ENCODE measurements at regions of chr12 and their contacts with region 1.

Region 1: DNA sequence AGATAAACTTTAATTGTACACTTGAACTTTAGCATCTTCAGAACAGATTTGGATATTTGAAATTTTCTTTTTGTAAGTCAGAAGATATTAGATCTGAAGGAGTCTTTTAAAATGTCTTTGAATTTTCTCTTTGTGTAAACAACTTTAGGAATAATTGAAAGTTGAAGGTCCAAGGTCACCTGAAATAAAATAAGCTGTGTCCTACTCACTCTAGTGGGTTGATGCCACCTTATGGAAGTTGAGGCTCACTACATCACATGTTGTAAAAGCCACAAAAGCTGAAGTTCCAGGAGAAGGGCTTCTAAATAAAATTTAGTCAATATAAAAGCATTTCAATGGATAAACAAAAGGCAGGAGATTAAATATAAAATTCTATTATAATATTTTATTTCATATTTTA is 122.0 kb upstream of the ATXN7L3B start:
- DNase-seq: peak in 1 of 2 experiments; percentile 23
- H3K4me3 ChIP-seq: no peak overlapping the region
- H3K4me3 Mint-ChIP-seq: no peak overlapping the region
- H3K27ac Mint-ChIP-seq: no peak overlapping the region
- H3K4me1 ChIP-seq: no peaks in the 10 kb centered on the region
- H3K4me1 Mint-ChIP-seq: no peaks in the 10 kb centered on the region
- H3K27me3 ChIP-seq: no peaks in the 10 kb centered on the region
- H3K27me3 Mint-ChIP-seq: no peaks in the 10 kb centered on the region
- CTCF ChIP-seq: peak; percentile 24 to 55

Region 2: DNA sequence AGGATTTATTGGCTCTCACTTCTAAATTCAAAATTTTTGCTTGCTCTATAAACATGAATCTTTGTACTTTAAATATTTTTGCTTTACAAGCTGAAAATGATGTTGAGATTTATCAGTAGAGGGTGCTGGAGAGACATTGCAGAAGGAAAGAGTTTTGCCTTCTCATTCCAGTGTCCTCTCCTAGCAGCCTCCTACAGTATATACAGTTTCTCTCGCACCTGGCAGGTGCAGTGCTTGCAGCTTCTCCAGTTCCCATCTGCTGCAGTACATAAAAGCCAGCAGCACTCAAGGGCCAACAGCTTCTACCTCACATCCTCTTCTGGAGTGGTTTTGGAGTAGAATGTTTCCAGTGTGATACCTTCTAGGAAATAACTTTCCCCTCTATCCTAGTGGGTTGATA is 479.8 kb before region 1 on chr12:
- CTCF ChIA-PET with region 1: interaction called, 4 read pairs
- POLR2A ChIA-PET with region 1: no interaction called
- intact Hi-C with region 1: loop called (anchors 1 kb)
- DNase-seq: peak in 1 of 2 experiments; percentile 22
- H3K4me3 ChIP-seq: no peak overlapping the region
- H3K4me3 Mint-ChIP-seq: no peak overlapping the region
- H3K27ac Mint-ChIP-seq: no peak overlapping the region
- H3K4me1 ChIP-seq: no peaks in the 10 kb centered on the region
- H3K4me1 Mint-ChIP-seq: no peaks in the 10 kb centered on the region
- H3K27me3 ChIP-seq: no peaks in the 10 kb centered on the region
- H3K27me3 Mint-ChIP-seq: no peaks in the 10 kb centered on the region
- CTCF ChIP-seq: peak; percentile 48 to 54

Region 3: DNA sequence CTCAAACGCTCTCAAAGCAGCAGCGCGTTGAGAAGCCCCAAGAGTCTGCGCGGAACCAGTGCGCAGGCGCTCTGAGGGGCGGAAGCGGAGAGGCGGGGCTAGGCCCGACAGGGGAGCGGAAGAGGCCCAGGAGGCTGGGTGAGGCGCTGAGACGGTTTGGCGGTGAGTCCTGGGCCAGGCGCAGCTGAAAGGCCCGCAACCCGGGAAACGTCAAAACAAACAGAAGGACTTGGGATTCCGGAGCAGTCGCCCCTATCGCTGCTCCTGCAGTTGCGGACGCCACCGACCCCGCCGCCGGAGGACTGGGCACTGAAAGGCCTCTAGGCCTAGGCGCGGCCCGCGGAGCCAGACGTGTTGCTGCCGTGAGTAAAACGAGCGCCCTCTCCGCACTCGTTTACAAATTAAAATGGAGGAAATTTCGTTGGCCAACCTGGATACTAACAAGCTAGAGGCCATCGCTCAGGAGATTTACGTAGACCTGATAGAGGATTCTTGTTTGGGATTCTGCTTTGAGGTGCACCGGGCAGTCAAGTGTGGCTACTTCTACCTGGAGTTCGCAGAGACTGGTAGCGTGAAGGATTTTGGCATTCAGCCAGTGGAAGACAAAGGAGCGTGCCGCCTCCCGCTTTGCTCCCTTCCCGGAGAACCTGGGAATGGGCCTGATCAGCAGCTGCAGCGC is 122.2 kb after region 1 on chr12 and contains the start of gene ATXN7L3B:
- CTCF ChIA-PET with region 1: no interaction called
- POLR2A ChIA-PET with region 1: no interaction called
- intact Hi-C with region 1: loop called (anchors 1 kb)
- DNase-seq: peak; percentile 94
- H3K4me3 ChIP-seq: peak within 1 kb of the TSS; percentile 86
- H3K4me3 Mint-ChIP-seq: peak within 1 kb of the TSS; percentile 98
- H3K27ac Mint-ChIP-seq: peak within 1 kb of the TSS; percentile 99
- H3K4me1 ChIP-seq: peaks cover 7% of the 10 kb centered on the region; the same call in 1 of the 2 replicates
- H3K4me1 Mint-ChIP-seq: peaks cover 18% of the 10 kb centered on the region
- H3K27me3 ChIP-seq: no peaks in the 10 kb centered on the region
- H3K27me3 Mint-ChIP-seq: no peaks in the 10 kb centered on the region
- CTCF ChIP-seq: no peak
- total RNA-seq, gene ATXN7L3B: 29.3 and 30.6 TPM in 2 replicates

Region 4: GRCh38 chr12:74563927-74564326 is 148.3 kb after region 1 on chr12:
- CTCF ChIA-PET with region 1: no interaction called
- POLR2A ChIA-PET with region 1: no interaction called
- intact Hi-C with region 1: no loop called
- DNase-seq: no peak
- H3K4me3 ChIP-seq: no peak overlapping the region
- H3K4me3 Mint-ChIP-seq: no peak overlapping the region
- H3K27ac Mint-ChIP-seq: no peak overlapping the region
- H3K4me1 ChIP-seq: no peaks in the 10 kb centered on the region
- H3K4me1 Mint-ChIP-seq: no peaks in the 10 kb centered on the region
- H3K27me3 ChIP-seq: no peaks in the 10 kb centered on the region
- H3K27me3 Mint-ChIP-seq: peaks cover 4% of the 10 kb centered on the region
- CTCF ChIP-seq: no peak

Region 5: DNA sequence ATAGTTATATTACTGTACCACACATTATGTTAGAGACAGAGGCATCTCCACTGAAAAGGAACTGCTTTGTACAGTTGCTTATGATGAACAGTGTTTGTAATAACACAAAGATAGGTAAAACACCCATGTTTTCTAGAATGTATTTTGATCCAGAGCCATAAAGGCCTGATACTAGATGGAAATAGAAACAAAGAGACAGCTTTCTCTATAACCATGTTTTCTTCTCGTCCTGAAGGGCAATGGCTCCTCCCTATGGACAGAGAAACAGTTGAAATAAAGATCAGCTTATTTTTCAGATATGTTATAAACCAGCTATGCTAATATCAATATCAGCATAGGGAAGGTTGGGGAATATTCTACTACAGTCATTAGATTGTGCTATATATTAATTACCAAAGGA is 231.2 kb after region 1 on chr12:
- CTCF ChIA-PET with region 1: interaction called, 6 read pairs
- POLR2A ChIA-PET with region 1: no interaction called
- intact Hi-C with region 1: loop called (anchors 2 kb)
- DNase-seq: no peak
- H3K4me3 ChIP-seq: no peak overlapping the region
- H3K4me3 Mint-ChIP-seq: no peak overlapping the region
- H3K27ac Mint-ChIP-seq: no peak overlapping the region
- H3K4me1 ChIP-seq: no peaks in the 10 kb centered on the region
- H3K4me1 Mint-ChIP-seq: no peaks in the 10 kb centered on the region
- H3K27me3 ChIP-seq: no peaks in the 10 kb centered on the region
- H3K27me3 Mint-ChIP-seq: peaks cover 3% of the 10 kb centered on the region
- CTCF ChIP-seq: no peak